ENCODE measurements at regions of chr18 and their contacts with region 1.

Region 1: DNA sequence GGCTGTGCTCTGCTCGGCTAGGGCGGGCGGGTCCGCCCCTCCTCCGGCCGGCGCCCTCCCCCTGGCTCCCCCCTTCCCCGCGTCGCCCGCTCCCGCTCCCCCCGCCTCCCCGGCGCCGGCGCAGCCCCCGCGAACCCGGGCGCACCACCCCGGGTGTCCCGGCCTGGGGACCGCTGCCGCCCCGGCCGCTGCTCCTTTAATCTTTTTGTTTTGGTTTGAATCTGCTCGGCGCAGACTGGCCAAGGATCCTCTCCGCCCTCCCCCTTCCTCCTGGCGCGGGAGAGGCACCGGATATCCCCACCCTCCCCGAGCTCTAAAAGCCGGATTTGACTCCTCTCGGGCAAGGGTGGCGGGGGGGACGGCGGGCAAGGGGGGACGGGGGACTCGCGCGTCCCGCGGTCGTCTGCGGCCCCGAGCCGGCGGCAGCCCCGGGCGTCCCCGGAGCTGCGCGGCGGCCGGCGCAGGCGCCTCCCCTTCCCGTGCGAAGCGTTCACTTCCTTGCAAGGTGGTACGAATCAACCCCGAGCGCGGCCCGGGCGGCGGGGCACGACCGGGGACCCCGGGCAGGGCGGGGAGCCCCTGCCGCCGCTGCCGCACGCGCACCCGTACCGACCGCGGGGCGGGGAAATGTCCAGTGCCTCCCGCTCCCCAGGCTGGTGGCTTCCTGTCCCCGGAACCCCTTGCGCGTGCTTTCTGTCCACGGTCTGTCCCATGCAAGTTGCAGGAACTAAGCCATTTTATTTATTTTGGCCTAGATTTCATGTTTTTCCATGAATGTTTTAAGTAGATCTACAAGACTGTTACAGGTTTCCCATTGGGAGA is at the start of gene PTGR3:
- DNase-seq: peak; percentile 81
- H3K4me3 Mint-ChIP-seq: peak within 1 kb of the TSS; percentile 96
- H3K27ac Mint-ChIP-seq: peak within 1 kb of the TSS; percentile 96
- H3K4me1 Mint-ChIP-seq: peaks cover 48% of the 10 kb centered on the region
- H3K27me3 Mint-ChIP-seq: peaks cover 29% of the 10 kb centered on the region
- total RNA-seq, gene PTGR3: 26.0 and 28.6 TPM in 2 replicates

Region 2: DNA sequence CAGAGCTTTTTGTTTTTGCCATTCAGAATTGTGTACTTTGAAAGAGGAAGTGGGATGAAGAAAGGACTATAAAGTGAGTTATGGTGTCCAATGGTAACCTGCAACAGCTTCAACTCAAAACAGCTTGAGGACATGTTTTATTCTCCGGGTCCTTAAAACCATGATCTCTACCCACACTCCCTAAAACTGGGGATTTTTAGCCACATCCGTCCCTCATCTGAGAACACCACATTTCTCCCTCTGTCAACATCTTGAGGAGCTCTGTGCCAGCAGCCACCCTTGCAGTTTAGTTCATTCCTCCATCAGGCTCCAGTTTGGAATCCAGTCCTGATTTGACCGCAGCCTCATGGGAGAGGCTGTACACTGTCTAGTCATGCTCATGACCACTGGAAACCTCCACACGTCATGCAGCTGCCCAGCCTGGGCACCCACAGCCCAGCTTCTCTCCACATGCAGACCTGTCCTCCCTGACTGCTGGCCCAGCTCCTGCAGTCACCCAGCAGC is 831.1 kb before region 1 on chr18:
- intact Hi-C with region 1: loop called (anchors 10 kb)
- DNase-seq: no peak
- H3K4me3 Mint-ChIP-seq: peak overlapping the region; percentile 24
- H3K27ac Mint-ChIP-seq: peak overlapping the region; percentile 28
- H3K4me1 Mint-ChIP-seq: peaks cover 42% of the 10 kb centered on the region
- H3K27me3 Mint-ChIP-seq: peaks cover 9% of the 10 kb centered on the region

Region 3: GRCh38 chr18:74994502-74995419 is 214.6 kb before region 1 on chr18:
- intact Hi-C with region 1: loop called (anchors 10 kb)
- DNase-seq: no peak
- H3K4me3 Mint-ChIP-seq: peak overlapping the region; percentile 51
- H3K27ac Mint-ChIP-seq: peak overlapping the region; percentile 67
- H3K4me1 Mint-ChIP-seq: peaks cover 52% of the 10 kb centered on the region
- H3K27me3 Mint-ChIP-seq: no peaks in the 10 kb centered on the region

Region 4: GRCh38 chr18:75247611-75248421 is 38.5 kb after region 1 on chr18:
- intact Hi-C with region 1: loop called (anchors 2 kb)
- DNase-seq: no peak
- H3K4me3 Mint-ChIP-seq: peak overlapping the region; percentile 79
- H3K27ac Mint-ChIP-seq: peak overlapping the region; percentile 52
- H3K4me1 Mint-ChIP-seq: peaks cover 35% of the 10 kb centered on the region
- H3K27me3 Mint-ChIP-seq: no peaks in the 10 kb centered on the region

Region 5: GRCh38 chr18:76374330-76375281 is 1165.3 kb after region 1 on chr18:
- intact Hi-C with region 1: loop called (anchors 10 kb)
- DNase-seq: peak; percentile 33
- H3K4me3 Mint-ChIP-seq: no peak overlapping the region
- H3K27ac Mint-ChIP-seq: peak overlapping the region; percentile 53
- H3K4me1 Mint-ChIP-seq: peaks cover 39% of the 10 kb centered on the region
- H3K27me3 Mint-ChIP-seq: peaks cover 7% of the 10 kb centered on the region

Measured in activated T-helper 2 cell treated with anti-CD3 and anti-CD28 coated beads, Interferon-gamma antibody, Interleukin-2, Interleukin-4, amounts not matched to agents 10 μg/mL and 5 μg/mL and 100 μg/mL, durations not matched to agents 14 hours and 24 hours and 36 hours (primary cell).